ENCODE measurements at regions of chr4 and their contacts with region 1.

Region 1: DNA sequence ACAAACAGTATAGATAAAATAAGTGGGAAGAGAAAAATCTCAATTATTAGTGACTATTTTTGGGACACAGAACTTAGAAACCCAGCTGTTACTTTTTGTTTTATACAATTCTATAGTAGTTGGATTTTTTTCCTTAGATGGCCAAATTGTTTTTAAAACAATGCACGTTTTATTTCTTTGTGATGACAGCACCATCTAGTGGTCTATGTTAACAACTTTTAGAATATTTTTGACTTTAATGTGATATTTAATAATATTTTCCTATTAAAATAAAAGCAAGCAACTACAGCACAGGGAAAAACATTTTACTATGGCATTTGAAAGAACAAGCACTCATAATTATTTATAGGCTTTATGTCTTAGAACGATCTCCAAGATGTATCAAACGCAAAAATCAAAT is 5.6 kb upstream of the SMIM31 start:
- DNase-seq: no peak
- ATAC-seq: no peak

Region 2: DNA sequence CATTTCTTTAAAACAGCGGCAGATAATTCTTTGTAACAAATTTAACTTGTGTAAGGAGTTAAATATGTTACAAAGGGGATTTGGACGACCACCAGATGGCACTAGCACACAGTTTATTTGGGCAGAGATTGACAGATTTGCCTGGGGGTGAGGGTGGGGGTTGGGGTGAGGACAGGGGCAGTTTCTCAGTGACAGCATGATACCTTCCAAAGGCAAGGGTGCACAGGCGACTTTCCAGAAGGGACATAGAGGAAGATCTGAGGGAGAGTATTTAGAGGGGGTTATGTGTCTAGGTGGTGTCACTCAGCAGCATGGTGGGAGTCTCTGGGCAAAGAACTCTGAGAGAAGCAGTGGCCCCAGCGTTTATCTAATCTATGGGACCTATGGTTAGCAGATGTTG is 1263.5 kb before region 1 on chr4:
- intact Hi-C with region 1: loop called (anchors 10 kb)
- DNase-seq: no peak
- ATAC-seq: no peak

Region 3: GRCh38 chr4:164313853-164314252 is 434.5 kb before region 1 on chr4:
- intact Hi-C with region 1: no loop called
- DNase-seq: no peak
- ATAC-seq: no peak

Region 4: GRCh38 chr4:165009493-165010227 is 261.3 kb after region 1 on chr4:
- intact Hi-C with region 1: no loop called
- DNase-seq: no peak
- ATAC-seq: no peak